ENCODE measurements at regions of chr12 and their contacts with region 1.

Region 1: DNA sequence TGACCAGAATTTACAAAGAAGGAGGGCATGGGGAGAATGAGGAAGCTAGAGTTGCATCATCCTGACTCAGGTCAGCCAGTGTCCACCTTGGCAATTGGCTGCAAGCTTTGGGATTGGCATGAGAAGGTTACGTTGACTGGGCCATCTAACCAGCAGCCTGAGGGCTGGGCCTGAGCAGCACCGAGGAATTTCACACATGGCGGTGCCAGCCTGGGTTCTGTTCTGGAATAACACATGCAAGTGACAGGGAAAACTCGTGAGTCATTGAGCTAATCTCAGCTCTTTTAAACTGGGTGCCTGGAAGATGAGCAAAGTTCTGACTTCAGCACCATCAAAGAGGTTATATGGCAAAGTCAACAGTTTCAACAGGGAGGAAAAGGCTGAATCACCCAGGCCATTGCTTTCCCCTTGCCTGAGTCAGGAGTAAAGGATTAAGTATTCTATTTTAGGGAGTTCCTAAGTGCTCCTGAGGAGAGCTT is 543.2 kb upstream of the TBX3 start:
- DNase-seq: peak; percentile 91
- H3K4me3 ChIP-seq: no peak overlapping the region
- H3K27ac ChIP-seq: no peak overlapping the region
- H3K4me1 ChIP-seq: peaks cover 12% of the 10 kb centered on the region
- H3K27me3 ChIP-seq: no peaks in the 10 kb centered on the region
- CTCF ChIP-seq: no peak

Region 2: GRCh38 chr12:115204957-115205754 is 22.0 kb before region 1 on chr12:
- CTCF ChIA-PET with region 1: no interaction called
- dilution Hi-C with region 1: no loop called
- in situ Hi-C with region 1: no loop called
- intact Hi-C with region 1: no loop called
- DNase-seq: peak; percentile 67
- H3K4me3 ChIP-seq: no peak overlapping the region
- H3K27ac ChIP-seq: no peak overlapping the region
- H3K4me1 ChIP-seq: peaks cover 6% of the 10 kb centered on the region
- H3K27me3 ChIP-seq: no peaks in the 10 kb centered on the region
- CTCF ChIP-seq: no peak

Region 3: GRCh38 chr12:115257791-115258190 is 30.6 kb after region 1 on chr12:
- CTCF ChIA-PET with region 1: no interaction called
- dilution Hi-C with region 1: no loop called
- in situ Hi-C with region 1: no loop called
- intact Hi-C with region 1: loop called (anchors 1 kb)
- DNase-seq: peak; percentile 94
- H3K4me3 ChIP-seq: no peak overlapping the region
- H3K27ac ChIP-seq: no peak overlapping the region
- H3K4me1 ChIP-seq: peaks cover 22% of the 10 kb centered on the region
- H3K27me3 ChIP-seq: no peaks in the 10 kb centered on the region
- CTCF ChIP-seq: no peak

Region 4: GRCh38 chr12:115341442-115341841 is 114.3 kb after region 1 on chr12:
- CTCF ChIA-PET with region 1: no interaction called
- dilution Hi-C with region 1: no loop called
- in situ Hi-C with region 1: no loop called
- intact Hi-C with region 1: loop called (anchors 5 kb)
- DNase-seq: peak; percentile 100
- H3K4me3 ChIP-seq: no peak overlapping the region
- H3K27ac ChIP-seq: peak overlapping the region; percentile 93
- H3K4me1 ChIP-seq: peaks cover 18% of the 10 kb centered on the region
- H3K27me3 ChIP-seq: no peaks in the 10 kb centered on the region
- CTCF ChIP-seq: no peak

Measured in mammary epithelial cell (primary cell).